OCI-LY7 (cell line): ENCODE measurements at regions of chr9 and their contacts with region 1.

Region 1: DNA sequence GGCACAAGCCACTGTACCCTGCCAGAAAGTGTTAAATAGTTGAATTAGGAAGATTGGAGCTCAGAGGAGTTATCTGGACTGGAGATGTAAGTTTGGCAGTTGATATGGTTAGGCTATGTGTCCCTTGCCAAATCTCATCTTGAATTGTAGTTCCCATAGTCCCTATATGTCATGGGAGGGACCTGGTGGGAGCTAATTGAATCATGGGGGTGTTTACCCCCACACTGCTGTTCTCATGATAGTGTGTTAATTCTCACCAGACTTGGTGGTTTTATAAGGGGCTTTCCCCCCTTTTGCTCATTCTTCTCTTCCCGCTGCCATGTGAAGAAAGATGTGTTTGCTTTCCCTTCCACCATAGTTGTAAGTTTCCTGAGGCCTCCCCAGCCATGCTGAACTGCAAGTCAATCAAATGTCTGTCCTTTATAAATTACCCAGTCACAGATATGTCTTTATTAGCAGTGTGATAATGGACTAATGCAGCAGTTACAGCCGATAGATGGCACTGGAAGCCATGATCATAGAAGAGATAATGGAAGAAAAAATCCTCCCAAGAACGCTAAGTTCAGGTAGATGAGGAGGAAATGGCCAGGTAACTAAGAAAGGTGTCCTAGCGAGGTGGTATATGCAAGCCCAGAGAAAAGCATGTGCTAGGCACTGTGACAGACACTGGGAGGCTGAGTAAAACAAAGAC is 51.4 kb downstream of the TNFSF8 start:
- DNase-seq: peak; percentile 44
- H3K4me3 ChIP-seq: no peak overlapping the region
- H3K27ac ChIP-seq: no peak overlapping the region
- H3K4me1 ChIP-seq: peaks cover 5% of the 10 kb centered on the region
- CTCF ChIP-seq: peak; percentile 72

Region 2: DNA sequence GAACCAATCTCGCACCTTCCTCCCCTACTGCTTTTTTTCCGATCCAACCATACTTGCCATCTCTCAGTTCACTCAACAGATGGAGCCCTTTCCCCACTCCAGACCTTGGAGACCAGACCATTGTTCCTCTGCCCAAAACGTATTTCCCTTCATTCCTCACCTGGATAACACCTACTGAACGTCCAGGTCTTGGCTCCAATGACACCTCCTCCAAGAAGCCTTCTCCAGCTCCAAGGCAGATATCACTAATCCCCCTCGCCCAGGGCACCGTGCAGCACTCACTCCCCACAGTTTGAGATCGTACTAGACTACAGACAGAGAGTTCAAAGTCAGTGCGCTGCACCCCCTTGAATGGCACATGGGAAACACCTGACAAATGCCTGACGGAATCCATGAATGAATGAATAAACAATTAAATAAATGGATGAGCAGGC is 444.1 kb before region 1 on chr9:
- CTCF ChIA-PET with region 1: no interaction called
- POLR2A ChIA-PET with region 1: no interaction called
- intact Hi-C with region 1: no loop called
- DNase-seq: peak; percentile 57
- H3K4me3 ChIP-seq: no peak overlapping the region
- H3K27ac ChIP-seq: no peak overlapping the region
- H3K4me1 ChIP-seq: peaks cover 9% of the 10 kb centered on the region
- CTCF ChIP-seq: peak; percentile 78

Region 3: GRCh38 chr9:115013998-115014397 is 135.0 kb after region 1 on chr9:
- CTCF ChIA-PET with region 1: no interaction called
- POLR2A ChIA-PET with region 1: no interaction called
- intact Hi-C with region 1: loop called (anchors 1 kb)
- DNase-seq: peak; percentile 83
- H3K4me3 ChIP-seq: no peak overlapping the region
- H3K27ac ChIP-seq: no peak overlapping the region
- H3K4me1 ChIP-seq: peaks cover 4% of the 10 kb centered on the region
- CTCF ChIP-seq: peak; percentile 95